ENCODE measurements at regions of chr9 and their contacts with region 1.

Region 1: GRCh38 chr9:77163884-77164283 is 13.4 kb upstream of the VPS13A start:
- DNase-seq: no peak
- CTCF ChIP-seq: no peak

Region 2: GRCh38 chr9:77152289-77152688 is 11.6 kb before region 1 on chr9:
- CTCF ChIA-PET with region 1: interaction called, 29 read pairs
- POLR2A ChIA-PET with region 1: no interaction called
- DNase-seq: no peak
- CTCF ChIP-seq: no peak

Region 3: DNA sequence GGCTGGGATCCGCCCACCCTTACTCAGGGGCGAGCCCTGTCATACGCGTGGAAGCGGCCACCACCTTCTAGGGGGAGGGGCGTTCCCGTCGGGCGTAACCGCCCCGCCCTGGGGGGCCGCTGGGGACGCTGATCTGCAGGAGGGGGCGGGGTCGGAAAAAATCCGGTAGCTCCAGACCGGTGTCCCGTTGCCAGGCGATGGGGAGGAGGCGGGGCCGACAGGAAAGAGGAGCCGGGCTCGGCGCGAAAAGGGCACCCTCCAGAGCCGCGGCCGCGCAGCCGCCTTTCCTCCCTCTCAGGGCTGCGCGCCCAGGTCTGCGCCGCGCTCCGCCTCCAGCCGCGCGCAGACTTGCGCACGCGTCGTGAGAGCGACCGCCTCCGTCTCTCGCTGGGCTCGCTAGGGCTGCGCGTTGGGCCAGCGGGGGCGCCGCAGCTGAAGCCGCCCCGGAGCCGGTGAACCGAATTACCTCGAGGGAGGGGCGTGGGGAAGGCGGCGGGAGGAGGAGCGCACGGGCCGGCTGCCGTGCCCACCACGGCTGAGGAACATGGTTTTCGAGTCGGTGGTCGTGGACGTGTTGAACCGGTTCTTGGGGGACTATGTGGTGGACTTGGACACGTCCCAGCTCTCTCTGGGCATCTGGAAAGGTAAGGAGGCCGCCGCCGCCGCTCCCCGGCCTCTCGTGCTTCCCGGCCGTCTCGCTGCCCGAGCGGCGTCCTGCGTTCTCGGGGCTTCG is 13.4 kb after region 1 on chr9 and contains the start of gene VPS13A:
- CTCF ChIA-PET with region 1: interaction called, 35 read pairs
- POLR2A ChIA-PET with region 1: no interaction called
- DNase-seq: peak; percentile 93
- CTCF ChIP-seq: peak; percentile 42